Activated T-helper 2 cell treated with anti-CD3 and anti-CD28 coated beads, Interferon-gamma antibody, Interleukin-2, Interleukin-4, amounts not matched to agents 10 μg/mL and 5 μg/mL and 100 μg/mL, durations not matched to agents 14 hours and 24 hours and 36 hours (primary cell): ENCODE measurements at regions of chr20 and their contacts with region 1.

Region 1: DNA sequence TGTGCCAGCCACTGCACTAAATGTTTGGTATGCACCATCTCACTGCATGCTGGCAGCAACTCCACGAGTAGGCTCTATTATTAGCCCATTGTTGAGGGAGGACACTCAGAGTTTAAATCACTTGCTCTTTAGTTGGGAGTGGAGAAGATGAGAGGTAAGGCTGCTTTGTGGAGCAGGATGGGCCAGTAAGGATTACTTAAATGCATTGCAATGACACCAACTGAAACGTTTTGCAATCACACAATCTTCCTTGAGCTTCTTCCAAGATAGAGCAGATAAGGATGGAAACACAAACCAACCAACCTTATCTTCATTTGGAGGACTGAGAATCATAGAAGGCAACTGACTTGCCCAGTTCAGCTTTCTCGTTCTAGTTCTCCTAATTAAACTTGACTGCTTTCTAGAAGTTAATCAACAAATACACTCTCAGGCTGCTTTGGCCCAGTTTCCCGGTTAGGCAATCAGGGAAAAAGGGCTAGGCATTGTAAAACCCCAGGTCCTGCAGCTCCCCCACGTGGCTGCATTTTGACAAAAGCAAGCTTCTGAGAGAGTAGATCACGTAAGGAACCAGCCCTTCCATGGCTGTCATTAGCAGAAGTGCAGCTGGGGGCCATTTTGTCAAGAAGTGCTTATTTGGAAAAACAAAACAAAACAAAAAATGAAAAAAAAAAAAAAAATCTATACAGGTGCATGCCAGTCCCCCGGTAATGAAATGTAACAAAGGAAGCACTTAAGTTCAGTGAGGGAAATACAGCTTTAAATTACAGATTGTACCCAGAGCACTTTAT is 130.6 kb downstream of the BCAS1 start:
- DNase-seq: peak; percentile 63
- H3K4me3 Mint-ChIP-seq: no peak overlapping the region
- H3K27ac Mint-ChIP-seq: no peak overlapping the region
- H3K4me1 Mint-ChIP-seq: peaks cover 43% of the 10 kb centered on the region
- H3K27me3 Mint-ChIP-seq: no peaks in the 10 kb centered on the region

Region 2: GRCh38 chr20:53413186-53413631 is 526.6 kb before region 1 on chr20:
- intact Hi-C with region 1: loop called (anchors 5 kb)
- DNase-seq: peak; percentile 41
- H3K4me3 Mint-ChIP-seq: no peak overlapping the region
- H3K27ac Mint-ChIP-seq: no peak overlapping the region
- H3K4me1 Mint-ChIP-seq: peaks cover 4% of the 10 kb centered on the region
- H3K27me3 Mint-ChIP-seq: no peaks in the 10 kb centered on the region

Region 3: GRCh38 chr20:53974785-53975555 is 35.2 kb after region 1 on chr20:
- intact Hi-C with region 1: no loop called
- DNase-seq: no peak
- H3K4me3 Mint-ChIP-seq: no peak overlapping the region
- H3K27ac Mint-ChIP-seq: no peak overlapping the region
- H3K4me1 Mint-ChIP-seq: no peaks in the 10 kb centered on the region
- H3K27me3 Mint-ChIP-seq: no peaks in the 10 kb centered on the region

Region 4: DNA sequence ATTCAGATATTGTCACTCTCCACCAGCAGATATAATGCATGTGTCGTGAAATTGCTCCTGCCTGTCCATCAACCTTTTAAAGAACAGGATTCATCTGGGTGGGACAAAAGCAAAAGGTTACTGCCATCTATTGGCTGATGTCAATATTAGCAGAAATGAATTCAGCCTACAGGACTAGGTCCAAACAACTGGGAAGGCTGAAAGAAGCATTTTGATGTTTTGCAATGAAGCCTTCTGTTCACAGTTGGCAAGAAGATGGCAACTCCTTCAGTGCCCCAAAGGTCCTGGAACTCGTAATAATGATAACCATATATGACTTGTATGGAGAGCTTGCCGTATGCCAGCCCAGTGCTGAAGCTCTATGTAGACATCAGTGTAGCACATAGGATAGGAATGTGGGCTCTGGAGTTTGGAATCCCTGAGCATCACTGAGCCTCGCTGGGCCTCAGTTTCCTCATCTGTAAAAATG is 123.1 kb after region 1 on chr20:
- intact Hi-C with region 1: loop called (anchors 5 kb)
- DNase-seq: no peak
- H3K4me3 Mint-ChIP-seq: no peak overlapping the region
- H3K27ac Mint-ChIP-seq: no peak overlapping the region
- H3K4me1 Mint-ChIP-seq: peaks cover 11% of the 10 kb centered on the region
- H3K27me3 Mint-ChIP-seq: no peaks in the 10 kb centered on the region